ENCODE measurements at regions of chr13 and their contacts with region 1.

Region 1: DNA sequence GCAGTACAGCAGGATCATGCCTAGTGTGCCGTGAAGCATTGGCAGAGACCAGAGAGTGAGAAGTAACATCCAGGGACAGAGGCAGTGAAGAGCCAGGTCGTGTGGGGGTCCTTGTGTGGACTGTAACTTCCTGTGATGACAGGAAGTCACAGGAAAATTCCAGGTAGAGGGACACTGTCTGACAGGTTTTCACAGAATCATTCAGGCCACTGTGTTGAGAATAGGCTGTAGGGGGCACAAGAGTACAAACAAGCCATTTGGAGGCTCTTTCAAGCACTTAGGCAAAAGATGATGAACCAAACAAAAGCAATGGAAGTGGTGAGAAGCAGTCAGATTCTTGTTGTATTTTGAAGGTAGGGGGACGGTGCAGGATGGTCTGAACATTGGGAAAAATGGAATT is 46.4 kb downstream of the N4BP2L1 start:
- DNase-seq: no peak
- H3K4me3 ChIP-seq: no peak overlapping the region
- H3K27ac ChIP-seq: no peak overlapping the region
- H3K4me1 ChIP-seq: no peaks in the 10 kb centered on the region
- H3K27me3 ChIP-seq: no peaks in the 10 kb centered on the region
- CTCF ChIP-seq: peak in 3 of 4 experiments; percentile 22 to 52 (median 40)
- POLR2A ChIP-seq: no peak

Region 2: GRCh38 chr13:32577032-32577431 is 195.5 kb after region 1 on chr13:
- intact Hi-C with region 1: loop called (anchors 10 kb)
- DNase-seq: no peak
- H3K4me3 ChIP-seq: no peak overlapping the region
- H3K27ac ChIP-seq: no peak overlapping the region
- H3K4me1 ChIP-seq: no peaks in the 10 kb centered on the region
- H3K27me3 ChIP-seq: no peaks in the 10 kb centered on the region
- CTCF ChIP-seq: no peak
- POLR2A ChIP-seq: no peak

Measured in prostate gland (tissue), 2 donors.